GM13977 (cell line): ENCODE measurements at regions of chr11 and their contacts with region 1.

Region 1: DNA sequence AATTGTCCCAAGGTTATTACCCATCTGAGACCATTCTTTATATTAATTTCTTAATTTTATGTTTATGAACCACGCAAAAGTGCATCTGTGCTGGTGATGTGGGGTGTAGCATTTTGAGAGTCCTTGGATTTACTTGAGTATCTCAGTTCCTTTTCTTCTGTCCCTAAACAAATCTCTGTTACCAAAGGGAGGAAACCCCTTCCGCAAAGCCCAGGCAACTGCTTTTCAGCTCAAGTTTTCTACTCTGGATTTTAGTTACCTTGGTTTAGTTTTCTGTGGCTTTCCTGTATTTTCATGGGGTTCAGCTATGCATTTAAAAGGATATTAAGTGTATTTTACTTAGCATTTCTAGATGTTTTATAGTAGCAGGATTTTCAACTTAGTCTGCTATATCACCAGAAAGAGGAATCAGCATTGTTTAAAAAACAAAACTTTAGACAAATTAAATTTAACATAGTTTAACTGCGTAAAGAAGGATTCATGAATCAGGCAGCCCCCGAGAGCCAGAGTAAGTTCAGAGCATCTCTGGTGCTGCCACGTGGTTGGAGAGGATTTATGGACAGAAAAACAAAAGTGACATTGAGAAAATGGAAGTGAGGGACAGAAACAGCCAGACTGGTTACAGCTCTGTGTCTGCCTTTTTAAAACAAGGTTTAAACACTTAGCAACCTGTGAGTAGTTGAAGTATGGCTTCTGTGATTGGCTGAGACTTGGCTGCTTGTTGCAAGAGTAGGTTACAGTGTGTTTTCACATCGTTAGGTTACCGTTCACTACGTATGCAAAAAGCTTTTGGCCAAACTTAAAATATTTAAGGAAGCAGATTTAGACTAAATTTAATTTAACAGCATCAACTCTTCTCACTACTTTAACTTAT is 9.6 kb downstream of the ADM start:
- DNase-seq: no peak
- CTCF ChIP-seq: no peak

Region 2: GRCh38 chr11:9757809-9758636 is 556.4 kb before region 1 on chr11:
- in situ Hi-C with region 1: loop called (anchors 10 kb)
- DNase-seq: peak; percentile 98
- CTCF ChIP-seq: peak; percentile 94

Region 3: DNA sequence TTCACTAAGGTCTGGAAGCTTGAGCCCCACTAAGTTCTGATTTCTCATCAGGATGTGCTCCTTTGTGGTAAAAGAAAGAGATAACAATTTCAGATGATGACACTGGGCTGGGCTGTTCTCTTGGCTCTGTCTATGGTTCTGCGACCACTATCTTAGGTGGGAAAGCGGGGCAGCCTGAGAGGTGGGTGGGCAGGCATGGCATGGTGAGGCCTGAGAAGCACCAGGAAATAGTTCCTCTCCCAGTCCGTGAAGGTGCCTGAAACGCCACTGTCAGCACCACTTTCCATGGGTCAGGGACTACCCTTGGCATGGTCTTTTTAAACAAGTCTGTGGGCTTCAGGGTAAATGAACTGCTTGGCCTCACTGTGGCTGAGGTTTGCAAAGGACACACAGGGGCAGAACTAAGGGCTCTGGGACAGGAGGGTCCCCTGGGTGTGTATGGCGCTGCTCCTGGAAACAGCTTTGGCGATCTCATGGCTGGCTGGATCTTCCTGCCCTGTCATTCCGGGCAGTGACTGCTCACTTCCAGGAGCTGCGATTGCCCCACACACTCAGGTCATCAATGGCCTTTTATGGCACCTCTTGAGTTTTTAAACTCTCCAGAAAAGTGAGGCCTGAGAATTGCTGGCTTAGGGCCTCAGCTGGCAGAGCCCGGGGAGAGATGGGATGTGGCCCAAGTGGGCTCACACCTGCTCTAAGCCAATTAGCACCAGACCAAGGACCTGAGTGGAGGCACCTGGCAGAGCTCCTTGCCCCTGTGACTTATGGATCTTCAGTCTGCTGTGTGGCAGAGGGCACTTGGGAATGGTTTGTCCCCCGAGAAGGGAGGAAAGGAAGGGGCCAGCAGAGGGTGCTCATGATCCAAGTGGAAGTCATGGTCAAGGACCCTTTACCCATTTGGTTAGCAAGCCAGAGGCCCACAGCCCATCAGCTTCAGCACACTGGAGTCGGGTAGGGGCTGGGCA is 309.6 kb after region 1 on chr11:
- in situ Hi-C with region 1: no loop called
- DNase-seq: peak; percentile 68
- CTCF ChIP-seq: peak; percentile 62